ENCODE measurements at regions of chr10 and their contacts with region 1.

Region 1: DNA sequence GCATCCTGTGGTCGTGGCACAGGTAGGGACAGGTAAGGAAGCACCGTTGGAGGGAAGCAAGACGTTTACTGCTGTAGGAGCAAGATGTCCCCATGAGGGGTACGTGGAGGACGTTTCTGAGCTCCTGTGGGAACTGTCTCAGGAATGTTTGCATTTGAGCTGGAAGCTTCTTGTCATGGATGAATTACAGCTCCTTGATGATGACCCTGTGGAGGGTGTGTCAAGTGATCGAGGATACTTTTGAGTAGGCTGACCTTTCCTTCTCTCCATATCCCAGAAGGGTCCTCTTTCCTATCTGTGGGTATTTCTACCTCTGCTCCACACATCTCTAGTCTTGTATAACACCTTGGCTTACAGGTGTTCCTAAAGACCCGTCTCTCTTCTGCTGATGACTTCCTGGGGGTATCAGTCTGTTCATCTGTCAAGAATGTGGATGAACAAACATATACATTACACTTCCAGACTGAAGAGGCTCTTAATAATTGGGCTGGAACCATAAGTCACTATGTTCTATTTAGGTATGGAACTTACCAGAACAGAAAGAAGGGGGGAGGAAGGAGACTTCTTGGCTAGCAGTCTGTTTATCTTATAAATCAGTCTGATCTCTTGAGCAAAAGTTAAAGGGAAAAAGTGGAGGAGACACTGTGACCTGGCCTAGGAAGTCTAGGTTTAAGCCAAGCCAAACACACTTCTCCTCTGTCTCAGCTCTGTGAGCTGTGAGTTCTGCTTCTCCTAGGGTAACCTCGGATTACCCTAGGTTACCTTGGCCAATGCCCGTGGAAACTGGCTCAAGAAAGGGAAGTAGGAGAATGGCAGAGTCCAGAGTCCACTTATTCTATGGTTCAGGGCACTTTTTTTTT is 95.0 kb downstream of the PFKFB3 start:
- DNase-seq: peak in 1 of 2 experiments; percentile 88
- H3K4me3 ChIP-seq: no peak overlapping the region
- H3K27ac ChIP-seq: peak overlapping the region; percentile 85
- H3K4me1 ChIP-seq: peaks cover 62% of the 10 kb centered on the region
- H3K27me3 ChIP-seq: no peaks in the 10 kb centered on the region
- CTCF ChIP-seq: no peak

Region 2: DNA sequence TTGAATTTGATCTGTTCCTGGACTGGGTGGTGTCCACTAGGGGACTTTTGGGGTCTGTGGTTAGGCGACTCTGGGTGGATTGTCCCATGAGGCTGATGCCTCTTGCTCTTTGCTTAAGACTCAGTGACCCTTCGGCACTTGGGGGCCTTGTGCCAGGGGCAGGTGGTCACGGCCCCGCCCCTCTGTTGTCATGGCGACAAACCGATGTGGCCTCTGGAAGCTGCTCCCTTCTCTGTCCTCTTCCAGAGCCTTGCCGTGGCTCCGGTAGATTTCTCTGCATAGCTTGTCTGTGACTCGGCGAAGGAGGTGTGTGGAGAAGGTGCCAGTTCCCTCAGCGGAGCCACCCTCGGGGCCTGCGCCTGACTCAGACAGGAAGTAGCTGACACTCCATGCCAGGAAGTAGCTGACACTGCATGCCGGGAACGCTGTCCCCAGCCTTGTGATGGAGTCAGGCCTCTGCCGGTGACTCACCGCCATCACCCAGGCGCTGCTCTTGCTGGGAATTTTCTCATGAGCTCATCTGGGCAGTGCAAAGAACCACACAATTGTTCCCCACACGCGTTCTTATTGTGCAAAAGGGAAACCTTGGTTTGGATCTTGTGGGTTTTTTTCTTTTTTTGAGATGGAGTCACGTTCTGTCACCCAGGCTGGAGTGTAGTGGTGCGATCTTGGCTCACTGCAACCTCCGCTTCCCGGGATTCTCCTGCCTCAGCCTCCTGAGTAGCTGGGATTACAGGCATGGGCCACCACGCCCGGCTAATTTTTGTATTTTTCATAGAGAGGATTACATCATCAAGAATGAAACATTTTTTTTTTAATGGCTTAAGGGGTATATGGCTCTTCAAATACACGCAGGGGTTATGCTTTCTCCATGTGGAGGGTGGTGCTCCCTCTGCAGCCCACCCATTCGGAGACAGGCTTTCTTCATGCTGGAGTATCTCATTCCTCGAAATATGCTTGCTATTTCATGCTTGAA is 22.4 kb before region 1 on chr10:
- CTCF ChIA-PET with region 1: no interaction called
- POLR2A ChIA-PET with region 1: interaction called, 3 read pairs
- intact Hi-C with region 1: loop called (anchors 2 kb)
- DNase-seq: peak; percentile 94 to 97
- H3K4me3 ChIP-seq: peak overlapping the region; percentile 54
- H3K27ac ChIP-seq: peak overlapping the region; percentile 89
- H3K4me1 ChIP-seq: peaks cover 36% of the 10 kb centered on the region
- H3K27me3 ChIP-seq: no peaks in the 10 kb centered on the region
- CTCF ChIP-seq: no peak

Region 3: GRCh38 chr10:6314620-6315205 is 17.0 kb after region 1 on chr10:
- CTCF ChIA-PET with region 1: no interaction called
- POLR2A ChIA-PET with region 1: interaction called, 21 read pairs
- intact Hi-C with region 1: no loop called
- DNase-seq: peak; percentile 48 to 70
- H3K4me3 ChIP-seq: no peak overlapping the region; the same call in 1 of the 2 replicates
- H3K27ac ChIP-seq: peak overlapping the region; percentile 47
- H3K4me1 ChIP-seq: peaks cover 20% of the 10 kb centered on the region
- H3K27me3 ChIP-seq: no peaks in the 10 kb centered on the region
- CTCF ChIP-seq: no peak